ENCODE measurements at regions of chr16 and their contacts with region 1.

Region 1: DNA sequence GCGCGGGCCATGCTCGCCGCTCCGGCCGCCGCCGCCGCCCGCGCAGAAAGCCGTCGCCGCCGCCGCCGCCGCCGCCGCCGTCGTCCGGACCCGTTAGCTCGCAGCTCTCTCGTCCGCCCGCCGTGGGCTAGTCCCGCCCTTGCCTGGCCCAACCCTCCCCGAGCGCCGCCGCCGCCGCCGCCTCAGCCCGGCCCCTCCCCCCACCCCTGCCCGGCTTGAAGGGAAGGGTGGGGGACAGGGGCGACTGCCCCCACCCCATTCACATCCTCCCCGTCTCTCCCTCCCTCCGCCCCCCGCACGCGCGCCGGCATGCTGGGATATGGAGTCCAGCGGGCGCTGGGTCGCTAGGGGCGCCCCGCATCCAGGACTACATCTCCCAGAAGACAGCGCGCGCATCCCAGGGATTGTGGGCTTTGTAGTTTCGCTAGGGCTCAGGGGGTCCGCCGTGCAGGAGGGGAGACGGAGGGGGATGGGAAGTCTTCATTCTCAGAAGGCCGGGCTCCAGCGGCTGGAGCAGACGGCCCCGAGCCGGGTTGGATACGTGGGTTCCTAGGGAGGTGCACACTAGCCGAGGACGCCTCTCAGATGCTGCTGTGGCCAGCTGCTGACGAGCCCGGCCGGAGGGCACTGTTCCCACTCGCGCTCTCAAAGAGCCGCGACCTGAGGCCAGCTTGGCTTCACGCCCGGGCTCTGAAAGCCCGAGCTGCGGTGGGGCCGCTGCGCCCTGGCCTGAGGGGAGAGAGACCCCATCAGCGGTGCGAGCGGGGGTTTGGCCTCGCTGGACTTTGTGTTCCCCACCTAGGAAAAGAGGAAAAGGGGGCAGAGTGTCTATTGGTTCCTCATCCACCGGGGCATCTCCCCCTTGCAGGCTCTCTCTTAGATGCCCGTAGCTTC is at the start of gene ST3GAL2:
- H3K4me3 ChIP-seq: peak within 1 kb of the TSS; percentile 52
- H3K27ac ChIP-seq: peak within 1 kb of the TSS; percentile 71
- H3K4me1 ChIP-seq: peaks cover 7% of the 10 kb centered on the region
- CTCF ChIP-seq: peak; percentile 63

Region 2: DNA sequence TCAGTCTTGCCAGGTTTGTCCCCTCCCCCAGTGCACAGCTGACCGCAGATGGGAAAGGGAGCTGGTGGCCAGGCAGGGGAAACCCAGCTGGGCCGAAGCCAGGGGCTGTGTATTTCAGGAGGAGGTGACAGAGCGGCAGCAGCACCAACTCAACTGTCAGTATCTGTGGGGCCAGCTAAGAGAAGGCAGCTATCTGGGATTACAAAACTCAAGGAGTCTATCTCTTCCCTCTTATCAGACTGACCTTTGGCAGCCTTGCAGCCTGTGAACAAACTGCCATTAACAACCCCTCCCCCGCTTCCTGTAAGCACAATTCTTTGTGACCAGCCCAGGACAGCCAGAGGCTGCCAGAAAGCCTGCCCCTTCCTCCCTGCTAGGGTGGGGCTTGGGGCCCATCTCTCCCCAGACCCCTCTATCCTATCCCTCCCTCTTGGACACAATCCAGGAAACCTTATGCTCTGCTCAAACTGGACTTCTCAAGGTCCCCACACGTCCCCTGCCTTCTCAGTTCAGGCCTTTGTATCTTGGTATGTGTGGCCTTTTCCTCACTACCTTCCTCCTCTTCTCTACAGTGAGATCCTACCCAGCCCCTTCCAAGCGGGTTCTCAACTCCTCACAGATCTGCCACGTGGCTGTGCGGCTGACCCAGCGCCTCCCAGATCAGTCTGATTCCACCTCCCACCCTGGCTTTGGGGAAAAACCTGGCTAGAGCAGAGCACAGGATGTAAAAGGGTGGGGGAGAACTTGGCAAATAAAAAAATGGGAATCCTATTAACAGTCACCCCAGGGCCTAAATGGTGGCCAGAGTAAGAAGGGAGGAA is 10.8 kb before region 1 on chr16:
- CTCF ChIA-PET with region 1: no interaction called
- POLR2A ChIA-PET with region 1: interaction called, 12 read pairs
- H3K4me3 ChIP-seq: no peak overlapping the region
- H3K27ac ChIP-seq: peak overlapping the region; percentile 65
- H3K4me1 ChIP-seq: peaks cover 22% of the 10 kb centered on the region
- CTCF ChIP-seq: no peak

Region 3: DNA sequence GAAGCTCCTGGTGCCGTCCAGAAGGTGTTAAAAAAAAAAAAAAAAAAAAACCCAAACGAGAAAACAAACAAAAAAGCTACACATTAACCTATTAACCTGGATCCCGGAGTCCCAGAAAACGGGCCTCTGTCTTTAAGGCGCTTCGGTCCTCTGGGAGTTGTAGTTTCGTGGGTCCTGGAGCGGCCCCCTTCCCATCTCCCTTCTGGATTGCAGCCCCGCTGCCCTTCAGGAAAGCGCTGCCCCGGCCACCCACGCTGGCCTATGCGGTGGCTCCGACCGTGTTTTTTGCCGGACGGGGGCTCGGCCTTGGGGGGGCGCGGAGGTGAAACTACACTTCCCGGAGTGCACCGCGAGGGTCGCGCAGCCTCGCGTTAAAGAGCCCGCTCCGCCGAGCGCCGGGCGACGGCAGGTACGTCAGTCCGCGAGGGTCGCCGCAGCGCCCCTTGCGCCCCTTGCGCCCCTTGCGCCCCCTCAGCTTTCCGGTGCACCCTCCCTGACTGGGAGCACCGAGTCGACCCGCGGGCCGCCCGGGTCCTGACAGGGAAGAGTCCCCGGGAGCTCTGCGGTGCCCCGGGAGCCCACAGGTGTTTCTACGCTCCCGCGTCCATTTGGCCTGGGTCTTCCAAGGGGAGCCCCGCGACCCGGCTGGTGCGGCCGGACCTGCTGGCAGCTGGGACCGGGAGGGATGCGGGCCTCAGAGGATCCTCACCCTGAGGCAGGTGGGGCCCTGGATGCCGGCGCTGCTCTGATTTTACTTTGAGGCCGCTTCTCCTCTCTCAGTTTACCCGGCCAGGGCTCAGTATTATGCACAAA is 15.2 kb after region 1 on chr16 and contains the start of gene FCSK:
- CTCF ChIA-PET with region 1: interaction called, 9 read pairs
- POLR2A ChIA-PET with region 1: interaction called, 31 read pairs
- H3K4me3 ChIP-seq: peak within 1 kb of the TSS; percentile 89
- H3K27ac ChIP-seq: peak within 1 kb of the TSS; percentile 98
- H3K4me1 ChIP-seq: no peaks in the 10 kb centered on the region
- CTCF ChIP-seq: peak; percentile 92

Region 4: GRCh38 chr16:70490261-70490803 is 51.1 kb after region 1 on chr16:
- CTCF ChIA-PET with region 1: no interaction called
- POLR2A ChIA-PET with region 1: no interaction called
- H3K4me3 ChIP-seq: no peak overlapping the region
- H3K27ac ChIP-seq: no peak overlapping the region
- H3K4me1 ChIP-seq: no peaks in the 10 kb centered on the region
- CTCF ChIP-seq: no peak

Measured in HEK293 (cell line).